Vagina (tissue), 2 donors: ENCODE measurements at regions of chr10 and their contacts with region 1.

Region 1: DNA sequence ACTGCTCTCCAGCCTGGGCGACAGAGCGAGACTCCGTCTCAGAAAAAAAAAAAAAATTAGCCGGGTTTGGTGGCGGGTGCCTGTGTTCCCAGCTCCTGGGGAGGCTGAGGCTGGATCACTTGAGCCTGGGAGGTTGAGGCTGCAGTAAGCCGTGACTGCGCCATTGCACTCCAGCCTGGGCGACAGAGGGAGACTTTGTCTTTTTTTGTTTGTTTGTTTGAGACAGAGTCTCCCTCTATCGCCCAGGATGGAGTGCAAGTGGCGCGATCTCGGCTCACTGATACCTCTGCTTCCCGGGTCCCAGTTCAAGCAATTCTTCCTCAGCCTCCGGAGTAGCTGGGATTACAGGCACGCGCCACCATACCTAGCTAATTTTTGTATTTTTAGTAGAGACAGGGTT is 4.9 kb upstream of the NUDT13 start:
- DNase-seq: no peak
- H3K4me3 ChIP-seq: no peak overlapping the region
- H3K27ac ChIP-seq: no peak overlapping the region
- H3K4me1 ChIP-seq: no peaks in the 10 kb centered on the region
- H3K27me3 ChIP-seq: no peaks in the 10 kb centered on the region
- CTCF ChIP-seq: no peak
- POLR2A ChIP-seq: no peak

Region 2: DNA sequence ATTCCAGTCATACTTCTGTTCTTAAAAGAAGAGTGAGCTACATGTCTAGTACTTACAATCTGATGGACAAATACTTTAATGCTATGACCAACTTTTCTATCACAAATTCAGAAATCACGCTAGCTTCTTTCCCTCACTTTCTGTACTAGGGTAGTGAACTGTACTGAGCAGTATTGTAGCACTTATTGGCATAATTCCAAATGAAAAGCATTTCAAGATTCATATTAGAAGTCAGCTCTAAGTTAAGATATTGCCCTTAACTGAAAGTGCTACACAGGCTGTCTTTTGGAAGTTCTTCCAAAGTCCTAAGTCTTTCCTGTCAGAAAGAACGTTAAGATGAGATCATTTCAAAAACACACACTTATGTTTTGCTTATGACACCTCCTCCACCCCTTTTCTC is 22.2 kb before region 1 on chr10:
- intact Hi-C with region 1: no loop called
- DNase-seq: no peak
- H3K4me3 ChIP-seq: no peak overlapping the region
- H3K27ac ChIP-seq: no peak overlapping the region
- H3K4me1 ChIP-seq: peaks cover 13% of the 10 kb centered on the region
- H3K27me3 ChIP-seq: no peaks in the 10 kb centered on the region
- CTCF ChIP-seq: no peak
- POLR2A ChIP-seq: no peak

Region 3: GRCh38 chr10:73174148-73174925 is 69.0 kb after region 1 on chr10:
- intact Hi-C with region 1: loop called (anchors 10 kb)
- DNase-seq: no peak
- H3K4me3 ChIP-seq: no peak overlapping the region
- H3K27ac ChIP-seq: no peak overlapping the region
- H3K4me1 ChIP-seq: peaks cover 1% of the 10 kb centered on the region
- H3K27me3 ChIP-seq: no peaks in the 10 kb centered on the region
- CTCF ChIP-seq: no peak
- POLR2A ChIP-seq: no peak